Sciatic nerve (tissue), 2 donors: ENCODE measurements at regions of chr3 and their contacts with region 1.

Region 1: DNA sequence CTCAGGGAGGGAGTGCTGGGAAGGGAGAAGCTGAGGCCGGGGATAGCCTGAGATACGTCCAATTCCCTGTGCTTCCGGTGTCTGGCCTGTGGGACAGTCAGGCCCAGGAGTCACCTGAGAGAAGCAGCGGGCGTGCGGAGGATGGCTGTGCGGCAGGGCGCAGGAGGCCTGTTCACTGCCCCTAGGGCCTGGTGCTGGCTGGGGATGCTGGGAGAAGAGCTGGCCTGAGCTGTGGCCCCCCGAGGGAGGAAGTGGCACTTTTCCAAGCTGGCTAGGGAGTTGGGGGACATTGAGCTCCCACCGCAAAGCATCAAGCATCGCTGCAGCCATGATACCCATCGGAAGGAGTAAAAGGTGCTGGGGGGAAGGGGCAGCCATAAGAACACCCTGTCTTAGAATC is 108.8 kb downstream of the CHST2 start:
- DNase-seq: no peak
- ATAC-seq: no peak

Region 2: DNA sequence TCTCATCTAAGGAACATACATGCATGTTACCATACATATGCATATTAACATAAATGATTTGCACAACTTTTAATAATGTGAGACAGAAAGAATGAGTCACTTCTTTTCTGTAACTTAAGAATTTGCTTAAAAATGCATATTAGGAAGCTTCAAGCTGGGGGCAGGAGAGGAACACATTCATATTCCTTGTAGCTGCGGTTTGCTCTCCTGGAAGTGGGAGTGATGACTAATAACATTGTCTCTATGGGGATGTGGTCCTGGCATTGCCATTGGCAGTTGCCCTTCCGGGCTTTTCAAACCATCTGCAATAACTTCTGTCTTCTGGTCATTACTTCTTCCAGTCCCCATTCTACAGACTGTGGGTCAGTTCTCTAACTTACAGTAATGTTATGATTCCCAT is 93.3 kb before region 1 on chr3:
- intact Hi-C with region 1: no loop called
- DNase-seq: no peak
- ATAC-seq: peak; percentile 66

Region 3: GRCh38 chr3:143261848-143262247 is 33.4 kb after region 1 on chr3:
- intact Hi-C with region 1: loop called (anchors 1 kb)
- DNase-seq: no peak
- ATAC-seq: no peak